Uterus (tissue), 4 donors: ENCODE measurements at regions of chr6 and their contacts with region 1.

Region 1: DNA sequence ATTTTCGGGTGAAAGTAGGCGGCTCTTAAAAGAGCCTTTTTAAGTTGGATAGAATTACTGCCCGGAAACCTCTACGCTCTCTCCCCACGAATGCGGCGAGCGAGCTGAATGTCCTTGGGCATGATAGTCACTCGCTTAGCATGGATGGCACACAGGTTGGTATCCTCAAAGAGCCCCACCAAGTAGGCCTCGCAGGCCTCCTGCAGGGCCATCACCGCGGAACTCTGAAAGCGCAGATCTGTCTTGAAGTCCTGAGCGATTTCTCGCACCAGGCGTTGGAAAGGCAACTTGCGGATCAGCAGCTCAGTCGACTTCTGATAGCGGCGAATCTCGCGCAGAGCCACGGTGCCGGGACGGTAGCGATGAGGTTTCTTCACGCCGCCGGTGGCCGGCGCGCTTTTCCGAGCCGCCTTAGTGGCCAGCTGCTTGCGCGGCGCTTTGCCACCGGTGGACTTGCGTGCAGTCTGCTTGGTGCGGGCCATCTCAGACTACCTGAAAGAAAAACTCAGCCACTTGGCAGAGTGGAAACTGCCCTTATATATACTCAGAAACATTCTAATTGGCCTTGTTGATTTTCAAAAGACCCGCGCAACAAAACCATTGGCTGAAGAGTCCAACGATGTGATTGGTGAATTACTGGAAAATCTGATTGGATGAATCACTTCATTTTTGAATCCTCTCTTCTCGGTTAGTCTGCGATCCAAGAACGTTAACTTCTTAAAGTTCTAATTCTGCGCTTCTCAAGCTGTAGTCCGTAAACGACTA is 93.9 kb upstream of the BTN3A2 start:
- DNase-seq: peak; percentile 49 to 79
- H3K4me3 ChIP-seq: peak overlapping the region in 1 of 2 donors; percentile 38
- H3K27ac ChIP-seq: peak overlapping the region; percentile 89 to 91
- H3K4me1 ChIP-seq: peaks cover 0 to 4% of the 10 kb centered on the region in 2 donors
- H3K27me3 ChIP-seq: peaks cover 4 to 6% of the 10 kb centered on the region in 2 donors
- CTCF ChIP-seq: no peak
- POLR2A ChIP-seq: peak; percentile 38 to 51

Region 2: DNA sequence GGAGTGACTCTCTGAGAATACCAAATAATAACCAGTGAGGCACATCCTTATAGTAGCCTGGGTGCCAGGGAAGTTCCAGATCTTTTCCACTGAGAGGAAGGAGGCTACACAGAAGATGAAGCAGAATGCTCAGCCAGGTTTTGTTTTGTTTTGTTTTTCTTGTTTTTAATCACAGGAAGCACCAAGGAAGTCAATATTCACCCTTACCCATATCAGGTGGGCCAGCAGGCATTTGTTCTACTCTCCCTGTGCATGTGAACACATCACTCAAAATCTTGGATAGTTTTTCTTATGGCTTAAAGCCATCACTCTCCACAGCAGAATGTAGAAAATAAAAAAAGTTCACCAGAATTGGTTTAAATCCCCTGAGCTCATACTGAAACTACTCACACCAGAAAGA is 449.7 kb before region 1 on chr6:
- intact Hi-C with region 1: no loop called
- DNase-seq: no peak
- H3K4me3 ChIP-seq: no peak overlapping the region
- H3K27ac ChIP-seq: no peak overlapping the region
- H3K4me1 ChIP-seq: no peaks in the 10 kb centered on the region
- H3K27me3 ChIP-seq: no peaks in the 10 kb centered on the region
- CTCF ChIP-seq: no peak
- POLR2A ChIP-seq: no peak

Region 3: GRCh38 chr6:26054857-26055669 is 216.0 kb before region 1 on chr6:
- intact Hi-C with region 1: no loop called
- DNase-seq: peak; percentile 84 to 94
- H3K4me3 ChIP-seq: peak overlapping the region; percentile 62 to 68
- H3K27ac ChIP-seq: peak overlapping the region; percentile 94 to 96
- H3K4me1 ChIP-seq: no peaks in the 10 kb centered on the region
- H3K27me3 ChIP-seq: no peaks in the 10 kb centered on the region
- CTCF ChIP-seq: peak in 1 of 4 experiments; percentile 52
- POLR2A ChIP-seq: peak; percentile 7 to 44

Region 4: DNA sequence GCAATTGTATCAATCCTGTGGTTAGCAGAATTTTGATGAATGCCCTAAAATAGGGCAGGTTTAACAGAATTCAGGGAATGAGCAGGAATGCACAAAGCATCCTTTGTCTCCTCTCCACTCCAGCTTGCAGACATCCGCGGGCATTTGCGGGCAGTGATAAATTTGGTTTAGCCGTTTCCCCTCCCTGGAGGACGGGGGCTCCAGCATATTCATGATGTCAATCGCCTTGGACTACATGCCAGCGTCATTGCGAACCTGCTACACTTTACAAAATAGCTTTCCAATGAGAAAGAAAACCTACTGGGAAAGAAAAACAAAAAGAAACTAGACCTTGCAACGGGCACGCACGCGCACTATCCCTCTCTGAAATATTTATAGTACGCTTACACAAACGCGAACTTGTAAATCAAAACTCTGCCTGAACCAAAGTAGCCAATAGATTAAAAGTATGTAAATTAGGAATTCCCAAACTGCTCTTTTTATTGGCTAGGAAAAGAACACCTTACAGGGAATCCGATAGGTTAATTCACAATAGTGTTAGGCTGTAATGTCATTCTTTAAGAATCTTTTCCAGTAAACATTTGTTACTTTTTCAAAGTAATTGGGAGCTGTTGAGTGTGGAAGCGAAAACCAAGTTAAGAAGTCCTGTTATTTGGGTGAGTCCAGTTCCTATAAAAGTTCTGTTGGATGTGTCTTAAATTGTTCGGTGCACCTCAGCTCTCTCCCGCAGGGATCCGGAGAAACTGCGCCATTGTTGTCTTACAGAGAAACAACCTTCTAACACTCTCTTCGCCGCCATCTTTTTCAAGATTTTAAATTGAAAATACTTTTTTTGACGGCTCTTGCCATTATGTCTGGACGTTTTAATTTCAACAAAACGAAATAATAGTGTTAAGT is 47.2 kb before region 1 on chr6:
- intact Hi-C with region 1: loop called (anchors 10 kb)
- DNase-seq: peak; percentile 56 to 80
- H3K4me3 ChIP-seq: peak overlapping the region; percentile 42 to 48
- H3K27ac ChIP-seq: peak overlapping the region; percentile 86 to 88
- H3K4me1 ChIP-seq: no peaks in the 10 kb centered on the region
- H3K27me3 ChIP-seq: peaks cover 0 to 5% of the 10 kb centered on the region in 2 donors
- CTCF ChIP-seq: no peak
- POLR2A ChIP-seq: peak; percentile 72 to 84

Region 5: DNA sequence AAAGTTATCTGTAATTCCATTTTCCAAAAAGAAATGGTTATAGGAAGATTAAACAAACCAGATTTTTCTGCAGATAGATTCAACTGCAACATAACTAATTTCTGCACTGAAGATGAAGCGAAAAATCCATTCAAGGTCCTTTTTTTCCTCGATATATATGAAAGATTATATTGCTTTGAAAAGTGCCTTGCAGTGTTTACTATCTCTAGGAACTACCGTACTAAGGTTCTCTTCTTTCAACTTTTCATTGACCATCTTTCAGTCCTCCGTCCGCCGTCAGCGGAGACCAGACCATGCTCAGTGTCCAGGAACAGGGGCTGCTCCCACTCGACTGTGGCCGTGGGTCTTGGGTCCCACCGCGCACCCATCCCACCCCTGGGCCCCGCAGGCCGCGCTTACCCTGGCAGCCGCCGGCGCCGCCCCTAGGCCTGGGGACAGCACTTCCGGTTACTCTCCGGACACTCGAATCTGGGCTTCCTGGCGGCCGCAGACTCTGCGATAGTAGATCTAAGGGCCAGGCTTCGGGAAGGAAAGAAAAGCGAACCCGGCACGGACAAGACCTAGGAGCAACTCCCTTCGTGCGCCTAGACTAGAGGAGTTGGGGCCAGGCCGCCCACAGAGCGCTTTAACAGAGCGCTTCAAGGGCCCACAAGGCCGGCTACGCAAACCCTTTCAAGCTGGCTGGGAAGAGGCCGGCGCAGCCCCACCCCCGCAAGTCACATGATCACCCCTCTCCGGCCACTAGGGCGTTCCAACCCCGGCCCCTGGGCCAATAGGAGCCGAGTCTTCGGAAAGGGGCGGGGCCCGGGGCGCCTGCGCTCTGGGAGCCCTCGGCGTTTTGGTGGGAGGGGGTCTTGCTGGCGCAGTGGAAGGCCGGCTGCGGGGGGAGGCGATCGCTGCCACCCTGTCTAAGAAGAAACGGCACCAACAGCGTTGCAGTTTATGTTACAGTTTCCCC is 388.2 kb after region 1 on chr6 and contains the start of gene ZNF322:
- intact Hi-C with region 1: no loop called
- DNase-seq: peak; percentile 93 to 94
- H3K4me3 ChIP-seq: peak within 1 kb of the TSS; percentile 84 to 92
- H3K27ac ChIP-seq: peak within 1 kb of the TSS; percentile 85 to 91
- H3K4me1 ChIP-seq: no peaks in the 10 kb centered on the region
- H3K27me3 ChIP-seq: no peaks in the 10 kb centered on the region
- CTCF ChIP-seq: peak in 1 of 4 experiments; percentile 11
- POLR2A ChIP-seq: peak; percentile 60 to 75
- total RNA-seq, gene ZNF322: 38.7 to 184 (median 61.5) TPM